ENCODE measurements at regions of chr3 and their contacts with region 1.

Region 1: DNA sequence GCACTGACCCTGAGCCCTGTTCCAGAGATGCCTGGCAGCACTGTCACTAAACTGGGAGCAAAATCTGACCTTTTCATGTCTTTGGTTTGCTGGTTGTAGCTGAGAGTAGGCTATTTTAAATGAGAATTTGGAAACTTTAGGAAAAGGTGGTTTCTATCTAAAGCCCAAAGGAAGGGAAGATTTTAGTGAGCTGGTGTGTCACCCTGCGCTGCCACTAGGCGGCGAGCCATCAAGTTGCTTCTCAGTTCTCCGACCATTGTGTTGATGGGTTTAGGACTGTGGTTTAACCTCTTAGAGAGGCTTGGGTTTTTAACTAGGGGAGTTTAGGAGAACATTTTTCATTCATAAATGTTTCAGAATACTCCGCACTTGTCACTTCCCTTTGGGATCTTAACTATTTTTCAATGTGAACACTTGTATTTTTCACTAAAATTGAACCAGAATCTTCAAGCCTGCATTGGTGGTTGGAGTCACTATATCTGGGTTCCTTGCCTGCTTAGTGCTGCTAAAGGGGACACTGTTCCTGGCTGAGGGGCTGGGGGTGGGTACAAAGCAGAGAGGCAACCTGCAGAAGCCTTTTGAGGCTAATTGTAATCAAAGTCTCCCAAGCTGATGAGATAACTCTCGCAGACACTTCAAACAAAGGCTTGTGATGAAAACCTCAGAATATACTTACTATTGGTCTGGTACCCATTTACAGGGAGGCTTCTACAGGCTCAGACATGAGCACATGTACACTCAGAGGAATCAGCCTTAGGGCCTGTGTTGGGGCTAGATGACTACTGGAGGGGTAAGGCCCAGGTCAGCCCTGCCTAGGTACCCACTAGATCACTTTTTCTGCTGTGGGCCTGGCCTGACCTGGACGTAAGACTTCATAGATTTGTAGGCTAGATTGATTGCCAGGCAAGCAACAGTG is 16.8 kb downstream of the EXOSC7 start:
- DNase-seq: no peak
- ATAC-seq: no peak
- H3K4me3 ChIP-seq: no peak overlapping the region
- H3K27ac ChIP-seq: no peak overlapping the region
- H3K4me1 ChIP-seq: peaks cover 5% of the 10 kb centered on the region
- H3K27me3 ChIP-seq: no peaks in the 10 kb centered on the region
- CTCF ChIP-seq: peak; percentile 25 to 69 (median 54)
- EP300 ChIP-seq: no peak
- POLR2A ChIP-seq: no peak
- RAD21 ChIP-seq: 0 out of 2 replicates have a peak, but pooled peaks have one; percentile 12

Region 2: GRCh38 chr3:44516230-44516629 is 476.6 kb before region 1 on chr3:
- CTCF ChIA-PET with region 1: no interaction called
- POLR2A ChIA-PET with region 1: no interaction called
- RAD21 ChIA-PET with region 1: no interaction called
- SMC1A ChIA-PET with region 1: no interaction called
- in situ Hi-C with region 1: no loop called
- intact Hi-C with region 1: no loop called
- DNase-seq: no peak
- ATAC-seq: no peak
- H3K4me3 ChIP-seq: no peak overlapping the region
- H3K27ac ChIP-seq: no peak overlapping the region
- H3K4me1 ChIP-seq: peaks cover 5% of the 10 kb centered on the region; the same call in 1 of the 2 replicates
- H3K27me3 ChIP-seq: no peaks in the 10 kb centered on the region
- CTCF ChIP-seq: no peak
- EP300 ChIP-seq: no peak
- POLR2A ChIP-seq: no peak
- RAD21 ChIP-seq: no peak

Region 3: GRCh38 chr3:44976002-44976815 is 16.6 kb before region 1 on chr3 and contains the starts of genes EXOSC7 and ZDHHC3:
- CTCF ChIA-PET with region 1: interaction called, 34 read pairs
- POLR2A ChIA-PET with region 1: interaction called, 62 read pairs
- RAD21 ChIA-PET with region 1: interaction called, 7 read pairs
- SMC1A ChIA-PET with region 1: interaction called, 97 read pairs
- in situ Hi-C with region 1: no loop called
- intact Hi-C with region 1: loop called (anchors 2 kb)
- DNase-seq: no peak
- ATAC-seq: peak; percentile 86
- H3K4me3 ChIP-seq: peak within 1 kb of the TSS; percentile 94
- H3K27ac ChIP-seq: peak within 1 kb of the TSS; percentile 78
- H3K4me1 ChIP-seq: peaks cover 19% of the 10 kb centered on the region
- H3K27me3 ChIP-seq: no peaks in the 10 kb centered on the region
- CTCF ChIP-seq: 0 out of 6 replicates have a peak, but pooled peaks of 1 of the 3 experiments have one; percentile 7
- EP300 ChIP-seq: no peak
- POLR2A ChIP-seq: peak; percentile 99
- RAD21 ChIP-seq: no peak
- polyA plus RNA-seq, gene EXOSC7: 159 to 193 TPM
- polyA plus RNA-seq, gene ZDHHC3: 6.8 to 7.4 TPM